Transverse colon (tissue), 4 donors: ENCODE measurements at regions of chr22 and their contacts with region 1.

Region 1: DNA sequence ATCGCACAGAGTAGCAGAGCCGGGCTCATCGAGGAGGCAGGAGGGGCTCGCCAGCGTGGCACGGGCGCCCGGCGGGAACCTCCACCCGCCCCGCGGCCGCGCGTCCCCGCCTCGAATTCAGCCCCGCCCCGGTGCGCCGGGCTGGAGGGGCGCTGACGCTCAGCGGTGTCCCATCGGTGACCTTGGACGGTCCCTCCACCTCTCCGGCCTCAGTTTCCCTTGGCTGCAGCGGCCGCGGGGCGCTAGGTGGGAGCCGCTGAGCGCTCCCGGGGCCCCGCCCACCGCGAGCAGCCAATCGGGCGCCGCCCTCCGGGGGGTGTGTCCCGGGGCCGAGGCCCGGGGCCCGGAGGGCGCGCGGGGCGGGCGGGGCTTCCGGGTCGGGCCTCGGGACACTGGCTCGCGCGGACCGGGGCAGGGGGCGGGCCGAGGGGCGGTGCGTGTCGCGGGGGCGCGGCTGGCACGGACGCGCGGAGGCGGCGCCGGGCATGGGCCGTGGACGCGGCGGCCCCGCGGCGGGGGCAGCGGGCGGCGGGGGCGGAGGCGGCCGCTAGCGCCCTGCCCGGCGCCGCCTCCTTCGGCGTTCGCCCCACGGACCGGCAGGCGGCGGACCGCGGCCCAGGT is at the start of gene PPARA:
- DNase-seq: peak; percentile 96
- H3K4me3 ChIP-seq: peak within 1 kb of the TSS; percentile 85 to 97 (median 90)
- H3K27ac ChIP-seq: peak within 1 kb of the TSS; percentile 91 to 98 (median 95)
- H3K4me1 ChIP-seq: peaks cover 13 to 50% (median 29%) of the 10 kb centered on the region in 4 donors
- H3K27me3 ChIP-seq: no peaks in the 10 kb centered on the region
- CTCF ChIP-seq: no peak
- EP300 ChIP-seq: no peak
- POLR2A ChIP-seq: peak; percentile 40
- total RNA-seq, gene PPARA: 52.0 to 88.1 (median 74.7) TPM

Region 2: GRCh38 chr22:46250035-46250782 is 100.1 kb after region 1 on chr22 and contains the start of gene CDPF1:
- in situ Hi-C with region 1: no loop called
- intact Hi-C with region 1: loop called (anchors 5 kb)
- DNase-seq: peak; percentile 95
- H3K4me3 ChIP-seq: peak within 1 kb of the TSS; percentile 60 to 95 (median 78)
- H3K27ac ChIP-seq: peak within 1 kb of the TSS; percentile 92 to 95 (median 94)
- H3K4me1 ChIP-seq: peaks cover 0 to 23% (median 12%) of the 10 kb centered on the region in 4 donors
- H3K27me3 ChIP-seq: no peaks in the 10 kb centered on the region
- CTCF ChIP-seq: peak in 2 of 5 experiments; percentile 10 to 47
- EP300 ChIP-seq: no peak
- POLR2A ChIP-seq: peak; percentile 84
- total RNA-seq, gene CDPF1: 8.2 to 11.9 (median 9.0) TPM in 3 of 4 donors, not detected in the other

Region 3: GRCh38 chr22:46296257-46297150 is 146.4 kb after region 1 on chr22 and contains the start of gene GTSE1:
- in situ Hi-C with region 1: loop called in 1 of 4 experiments (anchors 10 kb)
- intact Hi-C with region 1: no loop called
- DNase-seq: peak; percentile 98
- H3K4me3 ChIP-seq: peak within 1 kb of the TSS; percentile 28 to 65 (median 51)
- H3K27ac ChIP-seq: peak within 1 kb of the TSS; percentile 93 to 97 (median 94)
- H3K4me1 ChIP-seq: peaks cover 16 to 22% (median 17%) of the 10 kb centered on the region in 4 donors
- H3K27me3 ChIP-seq: no peaks in the 10 kb centered on the region
- CTCF ChIP-seq: peak in 2 of 5 experiments; percentile 25 to 29
- EP300 ChIP-seq: no peak
- POLR2A ChIP-seq: peak; percentile 74
- total RNA-seq, gene GTSE1: 1.00 to 3.0 (median 1.2) TPM in 3 of 4 donors, not detected in the other

Region 4: DNA sequence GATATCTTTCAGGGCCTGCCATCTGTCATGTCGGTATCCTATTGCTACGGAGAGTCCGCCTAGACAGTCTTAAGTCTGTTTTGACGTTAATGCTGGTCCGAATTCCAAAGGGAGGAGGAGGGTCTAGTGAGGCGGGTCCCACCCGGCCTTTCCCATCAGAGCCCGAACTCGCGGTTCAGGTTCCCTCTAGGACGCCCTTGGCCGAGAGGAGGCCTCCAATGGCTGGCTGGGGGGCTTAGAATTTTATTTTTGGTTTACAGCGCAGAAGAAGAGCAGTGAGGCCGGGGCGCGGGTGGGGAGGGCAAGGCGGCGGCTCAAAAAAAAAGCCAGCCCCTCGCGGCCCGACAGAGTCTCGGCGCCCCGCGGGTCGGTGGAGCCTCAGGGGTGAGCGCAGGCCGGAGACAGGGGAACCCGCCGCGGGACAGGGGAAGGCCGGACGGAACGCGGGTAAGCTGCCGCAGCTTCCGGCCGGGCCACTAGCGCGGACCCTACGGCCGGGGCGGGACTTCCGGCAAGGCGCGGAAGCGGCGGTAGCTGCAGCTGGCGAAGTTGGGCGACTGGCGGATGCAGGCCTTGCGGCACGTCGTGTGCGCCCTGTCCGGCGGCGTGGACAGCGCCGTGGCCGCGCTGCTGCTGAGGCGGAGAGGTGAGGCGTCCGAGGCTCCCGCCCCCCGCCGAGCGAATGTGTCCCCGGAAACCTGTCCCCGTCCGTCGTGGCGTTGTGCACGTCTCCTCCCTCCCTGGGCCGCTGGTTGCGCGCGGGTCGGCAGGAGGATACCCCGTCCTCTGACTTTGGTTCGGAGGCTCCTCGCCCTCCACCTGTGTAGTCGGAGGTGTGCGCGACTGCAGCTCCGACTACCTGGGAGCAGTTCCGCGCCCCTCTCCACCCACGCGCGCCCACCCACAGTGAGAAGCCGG is 185.3 kb after region 1 on chr22 and contains the start of gene TRMU:
- in situ Hi-C with region 1: no loop called
- intact Hi-C with region 1: no loop called
- DNase-seq: peak; percentile 88
- H3K4me3 ChIP-seq: peak within 1 kb of the TSS; percentile 72 to 93 (median 82)
- H3K27ac ChIP-seq: peak within 1 kb of the TSS; percentile 84 to 92 (median 90)
- H3K4me1 ChIP-seq: peaks cover 7 to 15% (median 10%) of the 10 kb centered on the region in 4 donors
- H3K27me3 ChIP-seq: no peaks in the 10 kb centered on the region
- CTCF ChIP-seq: peak in 1 of 5 experiments; percentile 6
- EP300 ChIP-seq: no peak
- POLR2A ChIP-seq: peak; percentile 76
- total RNA-seq, gene TRMU: 33.7 to 90.0 (median 38.5) TPM